HEK293 (cell line): ENCODE measurements at regions of chr9 and their contacts with region 1.

Region 1: DNA sequence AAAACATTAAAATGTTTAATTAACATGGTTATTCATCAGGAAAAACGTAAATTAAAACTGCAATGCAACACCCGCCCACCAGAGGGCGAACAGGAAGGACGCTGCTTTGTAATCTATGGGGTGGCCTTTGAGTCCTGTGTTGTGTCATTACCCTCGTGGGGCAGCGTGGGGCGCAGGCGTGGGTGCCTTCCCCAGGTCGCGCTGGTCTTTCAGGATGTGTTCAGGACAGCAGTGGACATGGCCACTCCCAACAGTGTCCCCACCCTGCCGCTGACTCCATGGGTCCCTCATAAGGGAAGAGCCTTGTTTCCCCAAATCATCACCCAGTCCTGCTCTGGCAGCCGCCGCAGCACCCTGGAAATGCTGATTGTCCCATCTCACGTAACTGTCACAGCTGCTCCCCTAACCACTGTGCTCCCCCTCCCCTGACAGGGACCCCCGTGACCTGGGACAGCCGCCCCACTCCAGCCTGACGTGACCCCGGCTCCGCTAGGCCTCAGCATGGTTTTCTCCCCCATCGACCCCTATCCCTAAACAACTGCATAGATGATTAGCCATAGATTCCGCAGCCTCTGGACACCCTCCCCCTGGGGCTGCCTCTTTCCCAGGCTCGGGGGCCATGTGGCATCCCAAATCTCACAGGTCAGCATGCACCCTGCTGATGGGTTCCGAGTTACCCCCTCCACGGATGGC is 36.4 kb downstream of the GLT6D1 start:
- H3K4me3 ChIP-seq: no peak overlapping the region
- H3K27ac ChIP-seq: no peak overlapping the region
- H3K4me1 ChIP-seq: no peaks in the 10 kb centered on the region
- CTCF ChIP-seq: peak; percentile 76

Region 2: GRCh38 chr9:135615666-135616618 is 13.0 kb after region 1 on chr9:
- CTCF ChIA-PET with region 1: interaction called, 39 read pairs
- POLR2A ChIA-PET with region 1: no interaction called
- H3K4me3 ChIP-seq: no peak overlapping the region
- H3K27ac ChIP-seq: no peak overlapping the region
- H3K4me1 ChIP-seq: no peaks in the 10 kb centered on the region
- CTCF ChIP-seq: no peak

Region 3: DNA sequence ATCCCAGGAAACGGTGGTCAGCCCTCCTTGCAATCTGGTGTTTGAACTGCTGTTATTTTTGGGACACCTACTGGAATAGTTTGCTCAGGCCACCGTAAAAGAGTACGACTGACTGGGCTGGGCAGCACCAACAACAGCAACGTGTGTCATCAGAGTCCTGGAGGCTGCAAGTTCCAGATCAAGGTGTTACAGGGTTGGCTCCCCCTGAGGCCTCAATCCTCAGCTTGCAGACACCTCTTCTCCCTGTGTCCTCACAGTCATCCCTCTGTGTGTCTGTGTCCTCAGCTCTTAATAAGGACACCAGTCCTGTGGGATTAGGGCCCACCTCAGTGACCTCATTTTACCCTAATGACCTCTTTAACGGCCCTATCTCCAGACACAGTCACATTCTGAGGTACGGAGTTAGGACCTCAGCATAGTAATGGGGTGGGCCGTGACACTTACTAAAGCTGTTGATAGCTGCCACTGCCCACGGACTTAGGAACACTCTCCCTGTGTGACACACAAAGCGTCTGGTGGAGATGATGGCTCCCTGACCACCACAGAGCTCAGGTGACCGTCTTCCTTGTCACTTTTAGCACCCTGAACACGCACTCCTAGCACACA is 19.6 kb after region 1 on chr9:
- CTCF ChIA-PET with region 1: interaction called, 39 read pairs
- POLR2A ChIA-PET with region 1: no interaction called
- H3K4me3 ChIP-seq: no peak overlapping the region
- H3K27ac ChIP-seq: no peak overlapping the region
- H3K4me1 ChIP-seq: no peaks in the 10 kb centered on the region
- CTCF ChIP-seq: no peak

Region 4: GRCh38 chr9:135973277-135974219 is 370.6 kb after region 1 on chr9:
- CTCF ChIA-PET with region 1: interaction called, 10 read pairs
- POLR2A ChIA-PET with region 1: no interaction called
- H3K4me3 ChIP-seq: no peak overlapping the region
- H3K27ac ChIP-seq: no peak overlapping the region
- H3K4me1 ChIP-seq: no peaks in the 10 kb centered on the region
- CTCF ChIP-seq: no peak